Activated naive CD4-positive, alpha-beta T cell treated with anti-CD3 and anti-CD28 coated beads for 36 hours (primary cell): ENCODE measurements at regions of chr5 and their contacts with region 1.

Region 1: DNA sequence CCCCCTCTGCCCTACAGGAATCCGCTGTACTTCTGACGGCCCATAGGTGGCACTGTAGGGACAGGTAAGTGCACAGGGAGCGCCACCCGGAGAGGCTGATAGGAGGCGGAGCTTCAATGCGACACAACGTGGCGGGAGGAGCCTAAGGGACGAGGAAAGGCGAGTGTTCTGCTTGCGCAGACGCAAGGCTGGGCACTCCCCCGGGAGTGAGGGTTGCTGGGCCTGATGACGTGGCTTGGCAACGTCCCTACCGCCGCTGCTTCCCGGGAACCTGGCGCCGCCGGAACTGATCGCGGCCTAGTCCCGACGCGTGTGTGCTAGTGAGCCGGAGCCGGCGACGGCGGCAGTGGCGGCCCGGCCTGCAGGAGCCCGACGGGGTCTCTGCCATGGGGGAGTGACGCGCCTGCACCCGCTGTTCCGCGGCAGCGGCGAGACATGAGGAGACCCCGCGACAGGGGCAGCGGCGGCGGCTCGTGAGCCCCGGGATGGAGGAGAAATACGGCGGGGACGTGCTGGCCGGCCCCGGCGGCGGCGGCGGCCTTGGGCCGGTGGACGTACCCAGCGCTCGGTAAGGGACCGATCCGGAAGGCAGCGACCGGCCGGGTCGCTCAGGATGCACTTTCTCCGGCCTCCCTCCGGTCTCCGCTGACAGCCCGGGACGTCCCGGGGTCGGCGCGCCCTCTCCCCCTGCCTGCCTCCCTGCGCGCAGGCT is at the start of gene SLC30A5:
- DNase-seq: peak; percentile 99
- H3K4me3 Mint-ChIP-seq: peak within 1 kb of the TSS; percentile 88
- H3K27ac Mint-ChIP-seq: peak within 1 kb of the TSS; percentile 87
- H3K4me1 Mint-ChIP-seq: peaks cover 28% of the 10 kb centered on the region
- H3K27me3 Mint-ChIP-seq: no peaks in the 10 kb centered on the region
- total RNA-seq, gene SLC30A5: 30.0 to 36.2 TPM

Region 2: DNA sequence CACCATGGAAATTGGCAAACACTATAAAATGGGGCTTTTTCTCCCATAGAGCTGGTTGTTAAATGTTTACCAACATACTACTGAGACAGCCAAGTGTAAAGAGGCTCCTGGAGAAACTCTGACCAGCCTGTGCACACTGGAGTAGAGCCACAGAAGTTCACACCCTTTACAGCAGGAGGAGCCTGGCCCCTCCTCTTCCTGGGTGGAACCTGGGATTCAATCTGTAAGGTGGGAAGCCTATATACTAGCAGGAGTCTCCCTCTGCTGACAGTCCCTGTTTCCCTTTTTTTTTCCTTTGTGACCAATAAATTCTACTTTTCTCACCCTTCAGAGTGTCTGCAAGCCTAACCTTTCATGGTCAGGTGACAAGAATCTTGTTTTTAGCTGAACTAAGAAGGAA is 10.5 kb before region 1 on chr5:
- CTCF ChIA-PET with region 1: interaction called, 27 read pairs
- intact Hi-C with region 1: no loop called
- DNase-seq: peak; percentile 17
- H3K4me3 Mint-ChIP-seq: no peak overlapping the region
- H3K27ac Mint-ChIP-seq: peak overlapping the region; percentile 4
- H3K4me1 Mint-ChIP-seq: peaks cover 12% of the 10 kb centered on the region
- H3K27me3 Mint-ChIP-seq: no peaks in the 10 kb centered on the region

Region 3: GRCh38 chr5:69189162-69190086 is 95.5 kb after region 1 on chr5 and contains the start of gene CENPH:
- CTCF ChIA-PET with region 1: interaction called, 4 read pairs
- intact Hi-C with region 1: loop called (anchors 1 kb)
- DNase-seq: peak; percentile 96
- H3K4me3 Mint-ChIP-seq: peak within 1 kb of the TSS; percentile 84
- H3K27ac Mint-ChIP-seq: peak within 1 kb of the TSS; percentile 90
- H3K4me1 Mint-ChIP-seq: peaks cover 13% of the 10 kb centered on the region
- H3K27me3 Mint-ChIP-seq: no peaks in the 10 kb centered on the region
- total RNA-seq, gene CENPH: 93.0 to 95.2 TPM

Region 4: DNA sequence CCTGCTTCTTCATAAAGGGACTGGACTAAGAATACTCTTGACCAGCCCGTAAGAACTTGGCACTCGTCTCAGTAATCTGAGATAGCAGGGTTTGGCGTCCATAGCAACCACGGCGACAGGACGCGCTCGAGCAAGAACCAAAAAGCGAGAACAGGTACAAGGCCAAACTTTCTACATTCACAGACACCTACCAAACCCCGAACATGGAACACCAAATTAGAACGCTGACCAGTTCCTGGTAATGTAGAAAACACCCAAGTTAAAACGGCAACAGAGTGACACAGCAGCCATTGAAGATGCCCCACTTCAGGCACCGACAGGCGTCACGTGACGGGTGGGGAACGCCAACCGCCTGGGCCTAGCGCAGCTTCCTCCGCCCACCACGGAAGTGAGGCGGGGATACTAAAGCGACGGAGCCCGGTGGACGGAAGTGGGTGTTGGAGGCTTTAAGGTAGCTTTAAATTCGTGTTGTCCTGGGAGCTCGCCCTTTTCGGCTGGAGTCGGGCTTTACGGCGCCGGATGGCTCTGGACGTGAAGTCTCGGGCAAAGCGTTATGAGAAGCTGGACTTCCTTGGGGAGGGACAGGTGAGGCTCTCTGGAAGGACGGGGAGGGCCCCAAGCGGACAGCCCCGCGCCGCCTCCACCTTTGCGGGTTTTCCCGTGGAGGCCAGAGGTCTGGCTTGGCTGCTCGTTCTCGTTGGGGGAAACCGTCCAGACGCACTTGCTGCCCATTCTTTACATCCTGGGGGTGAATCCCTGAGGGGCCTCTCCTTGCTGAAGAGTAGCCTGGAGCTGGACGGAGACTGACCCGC is 140.7 kb after region 1 on chr5 and contains the start of gene CDK7:
- CTCF ChIA-PET with region 1: interaction called, 9 read pairs
- intact Hi-C with region 1: loop called (anchors 2 kb)
- DNase-seq: peak; percentile 95
- H3K4me3 Mint-ChIP-seq: peak within 1 kb of the TSS; percentile 97
- H3K27ac Mint-ChIP-seq: peak within 1 kb of the TSS; percentile 77
- H3K4me1 Mint-ChIP-seq: peaks cover 33% of the 10 kb centered on the region
- H3K27me3 Mint-ChIP-seq: no peaks in the 10 kb centered on the region
- total RNA-seq, gene CDK7: 23.8 to 28.4 TPM

Region 5: DNA sequence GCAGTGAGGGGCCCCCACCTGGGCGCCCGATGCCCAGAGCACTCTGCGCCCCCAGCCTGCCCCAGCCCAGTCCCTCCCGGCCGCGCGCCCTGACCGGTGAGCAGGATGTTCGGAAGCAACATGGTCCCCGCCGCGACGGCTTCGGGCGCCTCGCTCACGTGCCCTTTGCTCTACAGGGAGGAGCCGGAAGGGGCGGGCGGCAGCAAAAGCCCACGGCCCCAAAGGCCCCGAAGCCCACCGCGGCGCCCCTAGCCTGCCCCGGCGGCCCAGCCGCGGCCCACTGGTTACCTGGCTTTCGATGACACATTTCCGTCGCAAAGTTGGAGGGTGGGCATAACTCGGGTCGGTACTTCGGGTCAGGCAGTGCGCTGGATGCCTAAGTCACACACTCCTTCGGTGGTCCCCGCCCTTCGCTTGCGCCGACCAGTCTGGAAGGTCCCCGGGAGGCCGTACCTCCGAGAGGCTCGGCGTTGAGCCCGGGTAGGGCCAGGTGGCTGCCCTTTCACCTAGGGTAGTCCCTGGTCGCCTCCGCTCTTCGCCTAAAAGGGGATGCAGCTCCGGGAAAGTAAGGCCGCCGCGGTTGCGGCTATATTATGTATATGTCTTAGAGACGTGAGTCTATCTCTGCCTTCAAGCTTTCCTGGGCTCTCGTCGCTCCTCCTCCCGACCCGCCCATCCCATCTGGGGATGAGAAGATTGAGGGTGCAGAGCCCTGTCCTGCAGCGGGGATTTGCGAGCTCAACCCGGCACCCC is 275.6 kb after region 1 on chr5 and contains the starts of genes AK6, RAD17 and TAF9:
- CTCF ChIA-PET with region 1: interaction called, 5 read pairs
- intact Hi-C with region 1: loop called (anchors 1 kb)
- DNase-seq: peak; percentile 94
- H3K4me3 Mint-ChIP-seq: peak within 1 kb of the TSS; percentile 96
- H3K27ac Mint-ChIP-seq: peak within 1 kb of the TSS; percentile 96
- H3K4me1 Mint-ChIP-seq: peaks cover 42% of the 10 kb centered on the region
- H3K27me3 Mint-ChIP-seq: no peaks in the 10 kb centered on the region
- total RNA-seq, gene AK6: 102 to 103 TPM
- total RNA-seq, gene RAD17: 24.1 to 26.2 TPM
- total RNA-seq, gene TAF9: 74.9 to 79.1 TPM